Dorsolateral prefrontal cortex (tissue), 120 donors: ENCODE measurements at regions of chr2 and their contacts with region 1.

Region 1: DNA sequence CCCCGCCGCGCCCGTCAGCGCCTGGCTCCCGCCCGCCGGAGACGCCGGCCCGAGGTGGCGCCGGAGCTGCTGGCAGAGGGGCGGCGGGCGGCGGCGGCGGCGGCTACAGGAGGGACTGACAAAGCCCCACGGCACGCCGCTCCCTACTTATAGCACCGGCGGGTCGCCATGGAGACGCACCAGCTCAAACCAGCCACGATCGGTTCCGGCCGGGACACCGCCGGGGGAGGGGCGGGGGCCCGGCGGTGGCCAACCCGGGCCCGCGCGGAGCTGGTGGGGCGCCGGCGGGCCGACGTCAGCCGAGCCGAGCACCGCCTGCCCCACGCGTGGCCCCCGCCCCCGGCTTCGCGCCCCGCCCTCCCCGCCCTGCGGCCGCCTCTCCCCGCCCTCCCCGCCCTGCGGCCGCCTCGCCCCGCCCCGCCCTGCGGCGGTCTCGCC is at the start of gene ODC1:
- DNase-seq: peak; percentile 82 to 94 (median 92)
- H3K4me3 ChIP-seq: peak within 1 kb of the TSS; percentile 66 to 100 (median 82)
- H3K27ac ChIP-seq: peak within 1 kb of the TSS; percentile 57 to 98 (median 91)
- H3K27me3 ChIP-seq: no peaks in the 10 kb centered on the region
- CTCF ChIP-seq: no peak
- total RNA-seq, gene ODC1: 11.1 to 44.4 (median 22.4) TPM

Region 2: GRCh38 chr2:9951272-9951972 is 496.8 kb before region 1 on chr2 and contains the start of gene GRHL1:
- intact Hi-C with region 1: loop called in 1 of 2 experiments (anchors 5 kb)
- DNase-seq: peak; percentile 82 to 98 (median 90)
- H3K4me3 ChIP-seq: peak within 1 kb of the TSS; percentile 47 to 87 (median 73)
- H3K27ac ChIP-seq: peak within 1 kb of the TSS in 32 of 59 donors; percentile 26 to 81 (median 66)
- H3K27me3 ChIP-seq: peaks cover 0 to 2% (median 0%) of the 10 kb centered on the region in 45 donors
- CTCF ChIP-seq: peak in 15 of 56 donors; percentile 4 to 57 (median 16)
- total RNA-seq, gene GRHL1: 1.6 to 10.9 (median 6.4) TPM

Region 3: GRCh38 chr2:10043906-10044601 is 404.2 kb before region 1 on chr2:
- intact Hi-C with region 1: loop called in 1 of 2 experiments (anchors 5 kb)
- DNase-seq: peak; percentile 85 to 94 (median 90)
- H3K4me3 ChIP-seq: peak overlapping the region; percentile 38 to 75 (median 61)
- H3K27ac ChIP-seq: peak overlapping the region in 56 of 59 donors; percentile 55 to 94 (median 84)
- H3K27me3 ChIP-seq: no peaks in the 10 kb centered on the region
- CTCF ChIP-seq: peak in 7 of 56 donors; percentile 6 to 21 (median 11)

Region 4: GRCh38 chr2:10285556-10286198 is 162.6 kb before region 1 on chr2:
- intact Hi-C with region 1: loop called in 1 of 2 experiments (anchors 5 kb)
- DNase-seq: peak in 9 of 10 donors; percentile 79 to 93 (median 88)
- H3K4me3 ChIP-seq: peak overlapping the region in 3 of 59 donors; percentile 5 to 16 (median 15)
- H3K27ac ChIP-seq: peak overlapping the region; percentile 34 to 96 (median 86)
- H3K27me3 ChIP-seq: no peaks in the 10 kb centered on the region
- CTCF ChIP-seq: peak in 41 of 56 donors; percentile 10 to 63 (median 30)

Region 5: DNA sequence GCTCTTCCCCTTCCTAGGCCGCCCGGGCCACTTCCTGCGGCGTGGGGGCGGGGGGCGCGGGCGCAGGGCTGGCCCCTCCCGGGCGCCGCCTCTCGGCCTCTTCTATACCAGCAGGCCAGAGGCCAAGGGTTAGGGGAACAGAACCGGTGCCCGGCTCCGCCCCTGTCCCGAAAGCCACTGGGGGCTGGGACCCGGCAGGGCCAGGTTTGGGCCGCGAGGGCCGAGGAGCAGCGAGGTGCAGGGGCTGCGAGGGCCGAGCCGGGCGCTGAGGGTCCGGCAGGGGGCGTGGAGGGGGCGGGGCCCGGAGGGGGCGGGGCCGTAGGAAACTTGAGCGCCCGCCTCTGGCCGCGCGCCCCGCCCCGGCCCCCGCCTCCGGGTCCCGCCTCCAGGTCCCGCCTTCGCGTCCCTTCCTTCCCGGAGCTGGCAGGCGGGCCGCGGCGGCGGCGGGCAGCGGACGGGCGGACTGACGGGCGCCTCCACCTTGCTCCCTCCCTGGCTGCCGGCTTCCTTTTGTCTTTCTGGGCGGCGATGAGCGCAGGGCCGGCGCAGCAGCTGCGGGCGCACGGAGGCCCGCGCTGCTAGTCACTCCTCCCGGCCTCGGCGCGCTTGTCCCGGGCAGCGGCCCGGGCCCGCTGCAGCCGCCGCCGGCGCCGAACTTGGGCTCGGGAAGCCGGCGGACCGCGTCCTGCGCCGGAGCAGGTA is 145.6 kb before region 1 on chr2 and contains the start of gene HPCAL1:
- intact Hi-C with region 1: loop called in 1 of 2 experiments (anchors 5 kb)
- DNase-seq: peak in 9 of 10 donors; percentile 61 to 89 (median 78)
- H3K4me3 ChIP-seq: peak within 1 kb of the TSS; percentile 49 to 95 (median 80)
- H3K27ac ChIP-seq: peak within 1 kb of the TSS in 55 of 59 donors; percentile 5 to 87 (median 77)
- H3K27me3 ChIP-seq: no peaks in the 10 kb centered on the region
- CTCF ChIP-seq: peak; percentile 18 to 87 (median 66)
- total RNA-seq, gene HPCAL1: 40.1 to 252 (median 129) TPM

Region 6: DNA sequence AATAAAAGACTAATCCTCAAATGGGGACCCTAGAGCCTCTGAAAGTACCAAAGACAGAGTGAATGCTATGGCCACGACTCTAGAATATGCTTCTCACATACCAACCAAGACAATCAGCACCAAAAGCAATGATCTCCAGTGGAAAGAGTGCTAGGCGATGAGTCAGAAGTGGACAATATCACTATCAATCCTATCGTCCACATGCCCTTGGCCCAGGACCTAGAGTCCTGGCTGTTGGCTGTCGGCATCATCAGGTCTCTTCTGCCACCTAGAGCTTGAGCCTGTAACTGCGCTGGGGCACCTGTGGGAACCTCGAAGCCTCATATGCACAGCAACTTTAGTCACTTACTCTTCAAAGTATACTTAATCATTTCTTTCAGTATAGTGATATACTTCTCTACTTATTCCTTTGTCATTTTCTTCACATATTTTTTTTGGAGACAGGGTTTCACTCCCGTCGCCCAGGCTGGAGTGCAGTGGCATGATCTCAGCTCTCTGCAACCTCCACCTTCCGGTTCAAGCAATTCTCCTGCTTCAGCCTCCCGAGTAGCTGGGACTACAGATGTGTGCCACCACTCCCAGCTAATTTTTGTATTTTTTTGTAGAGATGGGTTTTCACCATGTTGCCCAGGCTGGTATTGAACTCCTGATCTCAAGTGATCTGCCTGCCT is 211.8 kb after region 1 on chr2:
- intact Hi-C with region 1: loop called in 1 of 2 experiments (anchors 10 kb)
- DNase-seq: peak in 9 of 10 donors; percentile 29 to 59 (median 53)
- H3K4me3 ChIP-seq: no peak overlapping the region
- H3K27ac ChIP-seq: no peak overlapping the region
- H3K27me3 ChIP-seq: no peaks in the 10 kb centered on the region
- CTCF ChIP-seq: peak in 54 of 56 donors; percentile 42 to 77 (median 64)